PC-9 (cell line): ENCODE measurements at regions of chr20 and their contacts with region 1.

Region 1: DNA sequence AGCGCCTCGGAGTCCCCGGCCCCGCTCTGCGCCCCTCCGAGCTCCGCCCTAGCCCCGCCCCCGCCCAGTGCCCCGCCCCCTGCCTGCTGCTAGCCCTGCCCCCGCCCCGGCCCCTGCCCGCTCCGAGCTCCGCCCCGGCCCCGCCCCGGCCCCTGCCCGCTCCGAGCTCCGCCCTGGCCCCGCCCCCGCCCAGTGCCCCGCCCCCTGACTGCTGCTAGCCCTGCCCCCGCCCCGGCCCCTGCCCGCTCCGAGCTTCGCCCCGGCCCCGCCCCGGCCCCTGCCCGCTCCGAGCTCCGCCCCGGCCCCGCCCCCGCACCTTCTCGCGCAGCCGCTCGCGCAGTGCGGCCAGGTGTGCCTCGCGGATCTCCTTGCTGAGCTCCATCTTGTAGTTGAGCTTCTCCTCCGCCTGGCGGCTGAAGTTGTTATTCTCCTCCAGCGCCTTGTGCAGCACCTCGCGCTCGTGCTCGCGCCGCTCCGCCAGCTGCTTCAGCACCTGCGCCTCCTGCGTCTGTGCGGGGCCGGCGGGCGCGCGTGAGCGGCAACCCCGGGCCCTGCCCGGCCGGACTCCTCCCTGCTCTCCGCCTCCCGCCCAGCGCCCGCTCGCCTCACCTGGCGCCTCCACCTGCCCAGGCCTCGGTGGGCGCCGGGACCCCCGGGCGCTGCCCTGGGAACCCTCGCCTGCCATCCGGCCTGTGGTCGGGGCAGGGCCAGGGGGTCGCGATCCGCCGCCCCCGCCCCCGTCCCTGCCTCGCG is 11.3 kb downstream of the STMN3 start:
- DNase-seq: peak; percentile 90 to 97
- H3K4me3 ChIP-seq: peak overlapping the region; percentile 92
- H3K27ac ChIP-seq: peak overlapping the region; percentile 21
- H3K4me1 ChIP-seq: peaks cover 16% of the 10 kb centered on the region
- H3K27me3 ChIP-seq: no peaks in the 10 kb centered on the region
- CTCF ChIP-seq: peak; percentile 65

Region 2: DNA sequence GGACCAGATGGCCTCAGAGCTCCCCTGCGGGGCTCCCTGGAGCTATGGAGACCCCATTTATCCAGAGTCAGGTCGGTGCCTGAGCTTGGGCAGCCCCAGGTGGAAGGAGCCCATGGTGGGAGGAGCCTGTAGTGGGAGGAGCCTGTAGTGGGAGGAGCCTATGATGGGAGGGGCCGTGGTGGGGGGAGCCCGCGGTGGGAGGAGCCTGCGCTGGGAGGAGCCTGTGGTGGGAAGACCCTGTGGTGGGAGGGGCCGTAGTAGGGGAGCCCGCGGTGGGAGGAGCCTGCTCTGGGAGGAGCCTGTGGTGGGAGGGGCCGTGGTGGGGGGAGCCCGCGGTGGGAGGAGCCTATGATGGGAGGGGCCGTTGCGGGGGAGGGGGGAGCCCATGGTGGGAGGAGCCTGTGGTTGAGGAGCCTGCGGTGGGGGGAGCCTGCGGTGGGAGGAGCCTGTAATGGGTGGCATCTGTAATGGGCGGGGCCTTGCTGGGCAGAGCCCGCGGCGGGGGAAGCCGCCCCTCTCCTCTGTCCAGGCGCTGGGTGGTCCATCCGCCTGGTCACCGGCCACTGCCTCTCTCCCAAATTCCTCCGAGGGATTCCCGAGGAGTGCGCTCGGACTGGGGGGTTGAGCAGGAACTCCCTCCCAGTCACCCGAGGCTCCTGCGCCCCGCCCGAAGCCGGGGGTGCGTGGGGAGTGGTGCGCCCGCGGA is 88.6 kb before region 1 on chr20:
- CTCF ChIA-PET with region 1: interaction called, 6 read pairs
- POLR2A ChIA-PET with region 1: interaction called, 5 read pairs
- intact Hi-C with region 1: loop called (anchors 5 kb)
- DNase-seq: peak; percentile 77 to 98
- H3K4me3 ChIP-seq: peak overlapping the region; percentile 81
- H3K27ac ChIP-seq: peak overlapping the region; percentile 79
- H3K4me1 ChIP-seq: peaks cover 15% of the 10 kb centered on the region
- H3K27me3 ChIP-seq: no peaks in the 10 kb centered on the region
- CTCF ChIP-seq: no peak

Region 3: GRCh38 chr20:63602321-63602720 is 39.6 kb before region 1 on chr20:
- CTCF ChIA-PET with region 1: no interaction called
- POLR2A ChIA-PET with region 1: no interaction called
- intact Hi-C with region 1: no loop called
- DNase-seq: no peak
- H3K4me3 ChIP-seq: no peak overlapping the region
- H3K27ac ChIP-seq: no peak overlapping the region
- H3K4me1 ChIP-seq: peaks cover 14% of the 10 kb centered on the region; the same call in 1 of the 2 replicates
- H3K27me3 ChIP-seq: no peaks in the 10 kb centered on the region
- CTCF ChIP-seq: no peak

Region 4: DNA sequence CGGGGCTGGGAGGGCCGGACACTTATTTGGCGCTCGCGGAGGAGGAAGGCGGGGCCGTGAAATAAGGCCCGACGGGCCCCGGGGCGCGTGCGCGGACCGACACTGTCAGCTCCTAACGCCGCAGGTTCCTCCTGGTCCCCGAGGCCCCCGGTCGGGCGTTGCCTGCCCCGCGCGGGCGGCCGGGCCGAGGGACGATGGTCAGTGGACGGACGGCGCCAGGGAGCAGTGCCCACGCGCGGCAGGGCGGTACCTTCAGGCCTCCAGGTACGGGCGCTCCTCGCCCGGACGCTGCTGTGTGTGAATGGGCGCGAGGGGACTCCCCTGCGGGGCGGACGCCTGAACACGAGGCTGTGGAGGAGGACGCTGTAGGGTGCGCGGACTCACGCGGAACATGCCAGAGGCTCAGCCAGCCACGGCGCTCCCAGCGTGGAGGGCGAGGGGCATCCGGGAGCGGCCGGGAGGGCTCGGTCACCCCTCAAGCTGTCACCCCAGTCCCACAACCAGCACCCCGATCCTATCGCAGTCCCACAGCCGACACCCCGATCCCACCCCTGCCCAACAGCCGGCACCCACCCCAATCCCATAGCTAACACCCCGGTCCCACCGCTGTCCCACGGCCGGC is 14.7 kb before region 1 on chr20:
- CTCF ChIA-PET with region 1: no interaction called
- POLR2A ChIA-PET with region 1: interaction called, 15 read pairs
- intact Hi-C with region 1: no loop called
- DNase-seq: peak; percentile 81 to 97
- H3K4me3 ChIP-seq: peak overlapping the region; percentile 92
- H3K27ac ChIP-seq: no peak overlapping the region
- H3K4me1 ChIP-seq: peaks cover 20% of the 10 kb centered on the region
- H3K27me3 ChIP-seq: no peaks in the 10 kb centered on the region
- CTCF ChIP-seq: no peak

Region 5: DNA sequence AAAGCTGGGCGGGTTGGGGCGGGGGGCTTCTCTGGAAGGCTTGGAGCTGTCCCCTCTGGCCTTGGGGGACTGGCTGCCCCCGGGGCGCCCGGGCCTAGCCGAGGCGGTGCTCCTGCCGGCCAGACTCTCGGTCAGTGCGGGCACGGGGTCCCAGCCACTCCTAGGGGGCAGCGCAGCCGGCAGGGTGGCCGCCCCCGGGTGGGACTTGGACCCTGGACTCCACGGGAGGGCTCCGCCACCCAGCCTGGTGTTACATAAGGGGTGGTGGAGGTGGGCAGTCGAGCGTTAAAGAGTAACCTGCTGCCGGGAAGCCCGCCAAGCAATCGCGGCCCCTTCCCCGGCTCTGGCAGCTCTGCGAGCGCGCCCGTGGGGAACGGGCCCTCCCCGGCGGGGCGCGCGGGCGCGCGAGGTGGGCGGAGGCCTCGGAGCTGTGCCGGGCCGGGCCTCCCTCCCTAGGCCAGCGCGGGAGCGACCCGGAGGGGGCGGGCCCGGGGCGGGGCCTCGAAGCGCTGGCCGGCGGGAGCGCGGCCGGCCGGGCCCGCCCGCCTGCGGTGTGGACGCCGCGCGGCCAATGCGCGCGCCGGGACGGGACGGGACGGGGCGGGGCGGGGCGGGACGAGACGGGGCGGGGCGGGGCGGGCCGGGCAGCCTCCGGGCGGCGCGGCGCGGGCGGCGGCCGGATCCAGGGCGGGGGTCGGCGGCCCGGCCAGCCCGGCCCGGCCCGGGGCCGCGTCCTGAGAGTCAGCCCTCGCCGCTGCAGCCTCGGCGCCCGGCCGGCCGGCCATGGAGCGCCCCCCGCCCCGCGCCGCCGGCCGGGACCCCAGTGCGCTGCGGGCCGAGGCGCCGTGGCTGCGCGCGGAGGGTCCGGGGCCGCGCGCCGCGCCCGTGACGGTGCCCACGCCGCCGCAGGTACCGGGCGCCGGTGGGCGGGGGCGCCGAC is 97.4 kb after region 1 on chr20 and contains the start of gene SLC2A4RG:
- CTCF ChIA-PET with region 1: interaction called, 18 read pairs
- POLR2A ChIA-PET with region 1: interaction called, 5 read pairs
- intact Hi-C with region 1: no loop called
- DNase-seq: peak in 1 of 2 experiments; percentile 85
- H3K4me3 ChIP-seq: peak within 1 kb of the TSS; percentile 46
- H3K27ac ChIP-seq: 0 out of 2 replicates have a peak within 1 kb of the TSS, but pooled peaks have one; percentile 13
- H3K4me1 ChIP-seq: peaks cover 9% of the 10 kb centered on the region
- H3K27me3 ChIP-seq: no peaks in the 10 kb centered on the region
- CTCF ChIP-seq: no peak
- total RNA-seq, gene SLC2A4RG: 167 and 233 TPM in 2 replicates

Region 6: GRCh38 chr20:63980806-63981728 is 339.1 kb after region 1 on chr20 and contains the start of gene PRPF6:
- CTCF ChIA-PET with region 1: no interaction called
- POLR2A ChIA-PET with region 1: interaction called, 12 read pairs
- intact Hi-C with region 1: no loop called
- DNase-seq: peak; percentile 90 to 96
- H3K4me3 ChIP-seq: peak within 1 kb of the TSS; percentile 99
- H3K27ac ChIP-seq: peak within 1 kb of the TSS; percentile 62
- H3K4me1 ChIP-seq: peaks cover 17% of the 10 kb centered on the region
- H3K27me3 ChIP-seq: no peaks in the 10 kb centered on the region
- CTCF ChIP-seq: peak; percentile 78
- total RNA-seq, gene PRPF6: 103 and 111 TPM in 2 replicates

Region 7: GRCh38 chr20:64247970-64248841 is 606.2 kb after region 1 on chr20:
- CTCF ChIA-PET with region 1: interaction called, 11 read pairs
- POLR2A ChIA-PET with region 1: no interaction called
- intact Hi-C with region 1: no loop called
- DNase-seq: no peak
- H3K4me3 ChIP-seq: no peak overlapping the region
- H3K27ac ChIP-seq: no peak overlapping the region
- H3K4me1 ChIP-seq: no peaks in the 10 kb centered on the region
- H3K27me3 ChIP-seq: peaks cover 95% of the 10 kb centered on the region
- CTCF ChIP-seq: no peak